Heart right ventricle (tissue), 16 donors: ENCODE measurements at regions of chr5 and their contacts with region 1.

Region 1: GRCh38 chr5:149381987-149382340 is 2.9 kb upstream of the IL17B start:
- DNase-seq: peak; percentile 84 to 88
- ATAC-seq: peak; percentile 73 to 88 (median 80)
- H3K4me3 ChIP-seq: peak overlapping the region in 1 of 10 donors; percentile 11
- H3K27ac ChIP-seq: peak overlapping the region; percentile 73 to 95 (median 90)
- H3K4me1 ChIP-seq: peaks cover 14 to 69% (median 52%) of the 10 kb centered on the region in 9 donors
- H3K27me3 ChIP-seq: no peaks in the 10 kb centered on the region
- CTCF ChIP-seq: peak; percentile 89 to 98 (median 97)

Region 2: DNA sequence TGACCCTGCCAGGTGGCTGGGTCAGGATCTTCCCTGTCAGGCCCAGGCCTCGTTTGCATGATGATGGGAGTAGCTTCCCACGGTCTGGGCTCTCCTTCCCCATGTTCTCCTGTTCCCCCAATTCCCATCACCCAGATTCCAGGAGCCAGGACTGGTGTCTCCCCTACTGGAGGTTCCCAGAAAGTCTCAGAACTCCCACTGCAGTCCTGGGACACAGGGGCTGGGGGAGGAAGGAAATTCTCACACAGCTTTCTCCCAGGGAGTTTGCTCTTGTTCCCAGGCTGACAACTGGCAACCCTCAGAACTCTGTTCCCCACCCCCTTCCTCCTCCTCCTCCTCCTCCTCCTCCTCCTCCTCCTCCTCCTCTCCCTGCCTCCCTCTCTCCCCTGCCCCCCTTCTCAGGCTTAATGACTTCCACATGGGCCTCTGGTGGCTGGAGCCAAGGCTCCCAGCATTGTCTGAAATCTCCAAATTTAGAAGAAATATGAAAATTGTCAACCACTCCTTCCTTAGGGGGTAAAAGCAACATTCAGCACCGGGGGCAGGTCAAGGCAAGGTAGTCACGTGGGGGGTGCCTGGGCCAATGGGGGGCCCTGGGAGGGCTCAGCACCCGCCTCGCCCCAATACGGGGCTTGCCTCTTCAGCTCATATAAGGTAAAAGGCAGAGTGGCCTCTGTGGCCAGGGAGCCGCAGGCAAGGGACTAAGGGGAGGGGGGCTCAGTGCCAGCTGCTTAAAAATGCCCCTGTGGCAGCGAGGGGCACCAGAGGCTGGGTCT is 24.4 kb after region 1 on chr5:
- intact Hi-C with region 1: no loop called
- DNase-seq: peak; percentile 68 to 75
- ATAC-seq: peak; percentile 78 to 89 (median 86)
- H3K4me3 ChIP-seq: peak overlapping the region; percentile 28 to 64 (median 54)
- H3K27ac ChIP-seq: peak overlapping the region; percentile 66 to 95 (median 80)
- H3K4me1 ChIP-seq: peaks cover 0 to 35% (median 11%) of the 10 kb centered on the region in 9 donors
- H3K27me3 ChIP-seq: no peaks in the 10 kb centered on the region
- CTCF ChIP-seq: peak in 1 of 9 donors; percentile 15

Region 3: DNA sequence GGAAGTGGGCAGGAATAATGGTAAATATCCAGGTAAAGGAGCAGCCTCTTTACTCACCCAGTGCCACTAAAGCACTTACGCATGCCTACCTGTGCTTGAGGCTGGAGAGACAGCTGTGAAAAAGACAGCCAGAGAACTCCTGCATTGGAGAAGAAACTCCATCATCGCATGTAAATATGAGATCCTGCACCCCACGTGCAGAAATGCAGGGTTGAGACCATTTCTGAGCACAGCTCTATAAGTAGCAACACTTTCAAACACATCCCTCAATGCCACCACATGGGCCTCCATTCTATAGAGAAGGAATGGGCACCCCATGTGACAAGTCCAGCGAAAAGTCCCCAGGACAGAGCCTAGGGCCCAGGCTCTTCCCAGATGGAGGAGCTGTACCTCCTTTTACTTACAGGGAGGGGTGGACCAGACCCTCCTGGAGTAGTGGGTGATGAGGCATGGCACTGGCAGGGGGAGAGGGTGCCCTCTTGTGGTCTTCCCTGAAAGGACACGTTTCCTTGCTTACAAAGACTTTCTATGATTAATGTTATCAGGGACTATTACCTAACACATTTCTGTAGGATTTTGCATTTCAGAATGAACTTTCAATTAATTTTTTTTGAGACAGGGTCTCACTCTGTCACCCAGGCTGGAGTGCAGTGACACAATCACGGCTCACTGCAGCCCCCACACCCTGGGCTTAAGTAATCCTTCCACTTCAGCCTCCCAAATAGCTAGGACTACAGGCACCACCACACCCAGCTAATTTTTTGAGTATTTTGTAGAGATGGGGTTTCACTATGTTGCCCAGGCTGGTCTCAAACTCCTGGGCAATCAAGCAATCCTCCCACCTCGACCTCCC is 52.4 kb after region 1 on chr5:
- intact Hi-C with region 1: loop called (anchors 1 to 5 kb)
- DNase-seq: peak in 1 of 2 donors; percentile 69
- ATAC-seq: peak in 7 of 8 donors; percentile 8 to 51 (median 25)
- H3K4me3 ChIP-seq: no peak overlapping the region
- H3K27ac ChIP-seq: peak overlapping the region in 9 of 10 donors; percentile 8 to 97 (median 55)
- H3K4me1 ChIP-seq: peaks cover 15 to 59% (median 19%) of the 10 kb centered on the region in 9 donors
- H3K27me3 ChIP-seq: no peaks in the 10 kb centered on the region
- CTCF ChIP-seq: peak; percentile 84 to 92 (median 90)

Region 4: DNA sequence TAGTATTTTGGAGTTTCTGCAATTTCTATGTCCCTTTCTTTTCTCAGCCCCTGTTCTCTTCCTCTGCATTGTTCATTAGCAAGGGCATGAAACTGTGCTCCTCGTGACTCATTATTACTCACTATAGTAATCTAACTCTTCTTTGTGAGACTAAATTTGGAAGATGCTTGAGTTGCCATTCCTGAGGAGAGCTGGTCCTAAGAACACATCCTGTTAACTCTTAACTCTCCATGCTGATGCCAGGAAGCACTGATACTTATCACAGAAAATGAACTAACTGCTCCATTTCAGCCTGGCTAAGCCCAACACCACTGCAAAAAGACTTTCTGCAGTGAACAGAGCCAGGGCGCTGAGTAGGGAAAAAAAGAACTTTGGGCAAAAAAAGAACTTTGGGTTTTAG is 179.9 kb after region 1 on chr5:
- intact Hi-C with region 1: loop called (anchors 1 to 5 kb)
- DNase-seq: peak in 1 of 2 donors; percentile 34
- ATAC-seq: peak; percentile 60 to 95 (median 90)
- H3K4me3 ChIP-seq: peak overlapping the region in 5 of 10 donors; percentile 5 to 24 (median 20)
- H3K27ac ChIP-seq: peak overlapping the region; percentile 5 to 94 (median 84)
- H3K4me1 ChIP-seq: peaks cover 6 to 47% (median 39%) of the 10 kb centered on the region in 9 donors
- H3K27me3 ChIP-seq: no peaks in the 10 kb centered on the region
- CTCF ChIP-seq: no peak

Region 5: DNA sequence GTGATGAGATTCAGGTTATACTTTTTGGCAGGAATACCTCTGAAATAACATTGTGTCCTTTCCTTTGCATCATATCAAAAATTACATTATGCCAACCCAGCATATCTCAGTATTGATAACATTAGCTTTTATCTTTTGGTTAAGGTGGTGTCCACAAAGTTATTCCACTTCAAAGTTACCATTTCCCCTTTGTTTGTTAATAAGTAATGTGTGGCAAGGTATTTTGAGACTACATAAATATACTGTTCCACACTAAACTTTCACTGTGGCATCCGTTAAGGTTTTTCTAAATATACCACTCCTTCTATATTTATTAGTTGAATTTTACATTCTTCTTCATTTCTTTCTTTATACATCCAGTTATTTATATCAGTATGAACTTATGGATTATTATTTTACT is 185.3 kb after region 1 on chr5:
- intact Hi-C with region 1: loop called (anchors 1 to 5 kb)
- DNase-seq: no peak
- ATAC-seq: no peak
- H3K4me3 ChIP-seq: no peak overlapping the region
- H3K27ac ChIP-seq: no peak overlapping the region
- H3K4me1 ChIP-seq: peaks cover 0 to 27% (median 22%) of the 10 kb centered on the region in 9 donors
- H3K27me3 ChIP-seq: no peaks in the 10 kb centered on the region
- CTCF ChIP-seq: no peak